ENCODE measurements at regions of chr5 and their contacts with region 1.

Region 1: DNA sequence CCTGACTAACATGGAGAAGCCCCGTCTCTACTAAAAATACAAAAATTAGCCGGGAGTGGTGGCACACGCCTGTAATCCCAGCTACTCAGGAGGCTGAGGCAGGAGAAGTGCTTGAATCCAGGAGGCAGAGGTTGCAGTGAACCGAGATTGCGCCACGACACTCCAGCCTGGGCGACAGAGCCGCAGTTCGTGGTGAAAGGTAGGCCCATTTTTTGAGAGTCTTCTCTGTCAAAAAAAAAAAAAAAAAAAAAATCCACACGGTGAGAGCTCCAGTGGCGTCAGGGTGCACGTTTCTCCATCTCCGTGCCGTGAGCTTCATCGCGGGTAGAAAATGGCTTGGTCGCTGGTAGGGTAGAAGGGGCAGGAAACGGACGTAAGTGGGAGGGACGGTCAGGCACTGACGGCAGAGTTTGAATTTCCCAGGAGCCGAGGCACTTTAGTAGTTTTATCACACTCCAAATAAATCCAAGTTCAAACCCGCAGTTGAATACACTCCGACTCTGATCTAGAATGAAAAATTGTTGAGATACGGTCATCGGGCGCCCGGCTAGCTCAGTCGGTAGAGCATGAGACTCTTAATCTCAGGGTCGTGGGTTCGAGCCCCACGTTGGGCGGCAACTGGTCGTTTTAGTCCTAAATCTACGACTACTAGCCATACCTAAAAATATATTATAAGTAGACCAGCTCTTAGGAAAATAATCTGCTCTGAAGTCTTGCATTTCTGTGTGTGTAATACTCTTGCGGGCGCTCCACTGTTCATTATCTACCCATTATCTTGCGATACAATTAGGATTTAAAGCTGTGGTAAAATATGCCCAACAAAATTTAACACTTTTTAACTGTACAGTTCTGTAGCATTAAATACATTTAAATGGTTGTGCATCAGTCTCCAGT is 2.5 kb upstream of the TRIM7 start:
- DNase-seq: peak; percentile 63
- H3K4me3 ChIP-seq: peak overlapping the region; percentile 62 to 75
- H3K27ac ChIP-seq: peak overlapping the region; percentile 58 to 82
- H3K4me1 ChIP-seq: peaks cover 0 to 21% of the 10 kb centered on the region in 2 experiments; a peak in 1 of 4 replicates
- H3K27me3 ChIP-seq: no peaks in the 10 kb centered on the region
- CTCF ChIP-seq: no peak
- EP300 ChIP-seq: no peak
- RAD21 ChIP-seq: no peak

Region 2: DNA sequence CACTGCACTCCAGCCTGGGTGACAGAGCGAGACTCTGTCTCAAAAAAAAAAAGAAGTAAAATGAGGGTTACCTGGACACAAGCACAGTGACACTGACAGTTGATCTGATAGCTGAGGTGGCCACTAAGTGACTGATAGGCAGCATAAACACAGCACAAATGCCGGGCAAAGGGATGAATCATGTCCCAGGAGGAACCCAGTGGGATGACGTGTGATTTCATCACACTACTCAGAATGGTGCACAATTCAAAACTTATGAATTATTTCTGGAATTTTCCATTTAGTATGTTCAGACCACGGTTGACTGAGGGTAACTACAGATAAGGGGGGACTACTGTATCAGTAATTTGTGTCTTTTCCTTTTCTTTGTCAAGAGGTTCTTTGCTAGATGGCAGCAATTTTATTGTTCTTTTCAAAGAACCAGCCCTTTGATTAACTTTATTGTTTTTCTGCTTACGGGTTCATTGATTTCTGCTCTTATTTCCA is 1101.6 kb before region 1 on chr5:
- CTCF ChIA-PET with region 1: no interaction called
- POLR2A ChIA-PET with region 1: no interaction called
- DNase-seq: no peak
- H3K4me3 ChIP-seq: no peak overlapping the region
- H3K27ac ChIP-seq: no peak overlapping the region
- H3K4me1 ChIP-seq: no peaks in the 10 kb centered on the region
- H3K27me3 ChIP-seq: no peaks in the 10 kb centered on the region
- CTCF ChIP-seq: no peak
- EP300 ChIP-seq: no peak
- RAD21 ChIP-seq: no peak

Region 3: GRCh38 chr5:180825768-180826525 is 381.5 kb before region 1 on chr5:
- CTCF ChIA-PET with region 1: no interaction called
- POLR2A ChIA-PET with region 1: no interaction called
- DNase-seq: no peak
- H3K4me3 ChIP-seq: no peak overlapping the region
- H3K27ac ChIP-seq: no peak overlapping the region
- H3K4me1 ChIP-seq: peaks cover 5 to 11% of the 10 kb centered on the region in 2 experiments; a peak in 1 of 4 replicates
- H3K27me3 ChIP-seq: no peaks in the 10 kb centered on the region
- CTCF ChIP-seq: no peak
- EP300 ChIP-seq: no peak
- RAD21 ChIP-seq: no peak

Region 4: GRCh38 chr5:181181650-181182565 is 25.6 kb before region 1 on chr5:
- CTCF ChIA-PET with region 1: interaction called, 72 read pairs
- POLR2A ChIA-PET with region 1: no interaction called
- DNase-seq: peak; percentile 71
- H3K4me3 ChIP-seq: no peak overlapping the region; a peak in 1 of 4 replicates
- H3K27ac ChIP-seq: no peak overlapping the region
- H3K4me1 ChIP-seq: no peaks in the 10 kb centered on the region; a peak in 1 of 4 replicates
- H3K27me3 ChIP-seq: no peaks in the 10 kb centered on the region
- CTCF ChIP-seq: peak; percentile 76
- EP300 ChIP-seq: no peak
- RAD21 ChIP-seq: peak; percentile 83

Region 5: DNA sequence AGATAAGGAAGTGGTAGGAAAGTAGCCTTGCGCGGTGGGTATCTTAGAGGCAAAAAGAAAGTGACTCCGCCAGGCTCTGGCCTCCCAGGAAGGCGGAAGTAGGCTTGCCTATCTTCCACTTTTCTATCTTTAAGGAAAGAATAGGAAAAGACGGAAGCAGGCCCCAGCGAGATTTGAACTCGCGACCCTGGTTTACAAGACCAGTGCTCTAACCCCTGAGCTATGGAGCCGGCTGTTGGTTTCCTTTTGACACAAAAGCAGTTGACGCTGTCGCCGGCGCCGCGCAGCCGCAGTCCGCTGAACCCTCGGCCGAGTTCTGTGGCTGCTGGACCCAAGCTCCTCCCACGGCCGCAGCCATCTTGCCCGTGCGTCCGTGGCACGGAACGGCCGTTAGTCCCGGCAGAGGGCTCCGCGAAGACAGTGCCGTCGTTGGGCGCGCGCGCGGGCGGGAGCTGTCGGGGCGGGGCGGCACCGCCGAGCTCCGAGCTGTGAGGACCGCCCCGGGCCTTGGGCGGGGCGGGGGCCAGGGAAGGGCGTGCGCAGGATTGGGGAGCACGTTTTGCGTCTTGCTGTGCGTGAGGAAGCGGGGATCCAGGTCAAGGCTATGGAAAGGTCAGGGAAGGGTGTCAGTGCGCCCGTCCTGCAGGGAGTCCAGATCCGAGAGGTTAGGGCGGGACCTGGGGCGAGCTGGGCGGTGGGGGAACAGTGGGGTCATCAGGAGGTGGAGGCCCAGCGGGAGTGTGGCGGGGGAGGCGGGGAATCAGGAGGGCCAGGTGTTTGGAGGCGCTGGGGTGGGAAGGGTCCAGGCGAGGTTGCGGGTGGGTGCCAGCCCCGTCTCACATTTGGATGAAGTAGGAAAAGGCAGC is 15.7 kb before region 1 on chr5:
- CTCF ChIA-PET with region 1: interaction called, 72 read pairs
- POLR2A ChIA-PET with region 1: interaction called, 6 read pairs
- DNase-seq: peak; percentile 95
- H3K4me3 ChIP-seq: peak overlapping the region; percentile 91 to 98
- H3K27ac ChIP-seq: peak overlapping the region; percentile 66 to 89
- H3K4me1 ChIP-seq: peaks cover 0 to 18% of the 10 kb centered on the region in 2 experiments; a peak in 1 of 4 replicates
- H3K27me3 ChIP-seq: no peaks in the 10 kb centered on the region
- CTCF ChIP-seq: no peak
- EP300 ChIP-seq: peak in 1 of 2 experiments; percentile 46; a peak in 1 of 4 replicates
- RAD21 ChIP-seq: no peak